ENCODE measurements at regions of chr19 and their contacts with region 1.

Region 1: DNA sequence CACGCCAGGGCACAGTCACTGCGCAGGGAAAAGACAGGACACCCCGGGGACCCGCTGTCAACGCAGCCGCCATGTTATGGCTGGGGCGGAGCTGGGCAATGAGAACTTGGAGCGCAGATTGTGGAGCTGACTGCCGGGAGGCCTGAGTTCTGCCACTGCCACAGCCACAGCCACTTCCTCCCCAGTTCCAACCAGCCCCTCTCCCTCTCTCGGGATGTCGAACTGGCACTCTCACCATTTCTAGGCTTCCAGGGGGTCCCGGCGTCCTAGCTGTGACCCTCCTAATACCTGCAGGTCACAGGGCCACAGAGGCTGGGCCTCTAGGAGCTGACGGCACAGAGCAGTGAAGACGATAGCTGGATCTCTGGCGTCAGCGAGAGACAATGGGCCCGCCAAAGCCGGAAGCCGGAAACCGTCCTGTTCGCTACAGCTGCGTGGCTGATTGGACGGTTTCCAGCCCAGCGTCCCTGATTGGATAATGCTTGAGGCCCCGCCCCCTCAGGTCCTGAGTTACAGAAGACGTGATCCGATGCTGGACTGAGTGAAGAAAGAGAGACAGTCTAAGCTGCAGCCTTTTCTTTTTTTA is at the start of gene ZNF506:
- DNase-seq: peak; percentile 95 to 99 (median 97)
- ATAC-seq: peak; percentile 82
- H3K4me3 ChIP-seq: peak within 1 kb of the TSS; percentile 91 to 97
- H3K4me3 Mint-ChIP-seq: peak within 1 kb of the TSS; percentile 100
- H3K27ac ChIP-seq: peak within 1 kb of the TSS; percentile 96 to 98
- H3K27ac Mint-ChIP-seq: peak within 1 kb of the TSS; percentile 100
- H3K4me1 ChIP-seq: peaks cover 33% of the 10 kb centered on the region
- H3K4me1 Mint-ChIP-seq: peaks cover 38% of the 10 kb centered on the region
- H3K27me3 ChIP-seq: no peaks in the 10 kb centered on the region
- H3K27me3 Mint-ChIP-seq: no peaks in the 10 kb centered on the region
- CTCF ChIP-seq: no peak
- total RNA-seq, gene ZNF506: 50.2 to 50.4 TPM

Region 2: GRCh38 chr19:19805480-19805879 is 16.0 kb before region 1 on chr19:
- CTCF ChIA-PET with region 1: interaction called, 4 read pairs
- POLR2A ChIA-PET with region 1: interaction called, 6 read pairs
- intact Hi-C with region 1: loop called in 1 of 2 experiments (anchors 2 kb)
- DNase-seq: no peak
- ATAC-seq: no peak
- H3K4me3 ChIP-seq: no peak overlapping the region
- H3K4me3 Mint-ChIP-seq: no peak overlapping the region
- H3K27ac ChIP-seq: no peak overlapping the region
- H3K27ac Mint-ChIP-seq: peak overlapping the region; percentile 45
- H3K4me1 ChIP-seq: peaks cover 10% of the 10 kb centered on the region
- H3K4me1 Mint-ChIP-seq: peaks cover 39% of the 10 kb centered on the region
- H3K27me3 ChIP-seq: no peaks in the 10 kb centered on the region
- H3K27me3 Mint-ChIP-seq: no peaks in the 10 kb centered on the region
- CTCF ChIP-seq: no peak

Region 3: GRCh38 chr19:19860756-19861390 is 39.4 kb after region 1 on chr19:
- CTCF ChIA-PET with region 1: interaction called, 5 read pairs
- POLR2A ChIA-PET with region 1: interaction called, 62 read pairs
- intact Hi-C with region 1: loop called (anchors 1 kb)
- DNase-seq: peak in 8 of 9 experiments; percentile 6 to 80 (median 62)
- ATAC-seq: peak; percentile 50
- H3K4me3 ChIP-seq: peak overlapping the region; percentile 2 to 11
- H3K4me3 Mint-ChIP-seq: peak overlapping the region; percentile 76
- H3K27ac ChIP-seq: no peak overlapping the region
- H3K27ac Mint-ChIP-seq: peak overlapping the region; percentile 64
- H3K4me1 ChIP-seq: no peaks in the 10 kb centered on the region
- H3K4me1 Mint-ChIP-seq: peaks cover 10% of the 10 kb centered on the region
- H3K27me3 ChIP-seq: no peaks in the 10 kb centered on the region
- H3K27me3 Mint-ChIP-seq: no peaks in the 10 kb centered on the region
- CTCF ChIP-seq: no peak

Region 4: GRCh38 chr19:19865739-19866481 is 44.5 kb after region 1 on chr19 and contains the start of gene ZNF253:
- CTCF ChIA-PET with region 1: interaction called, 5 read pairs
- POLR2A ChIA-PET with region 1: interaction called, 62 read pairs
- intact Hi-C with region 1: loop called (anchors 1 kb)
- DNase-seq: peak; percentile 88 to 97 (median 95)
- ATAC-seq: peak; percentile 93
- H3K4me3 ChIP-seq: peak within 1 kb of the TSS; percentile 89 to 99
- H3K4me3 Mint-ChIP-seq: peak within 1 kb of the TSS; percentile 100
- H3K27ac ChIP-seq: peak within 1 kb of the TSS; percentile 89 to 91
- H3K27ac Mint-ChIP-seq: peak within 1 kb of the TSS; percentile 98
- H3K4me1 ChIP-seq: peaks cover 22% of the 10 kb centered on the region
- H3K4me1 Mint-ChIP-seq: peaks cover 39% of the 10 kb centered on the region
- H3K27me3 ChIP-seq: no peaks in the 10 kb centered on the region
- H3K27me3 Mint-ChIP-seq: no peaks in the 10 kb centered on the region
- CTCF ChIP-seq: no peak
- total RNA-seq, gene ZNF253: 2.6 to 3.2 TPM

Region 5: GRCh38 chr19:19900729-19901444 is 79.4 kb after region 1 on chr19 and contains the start of gene ZNF93:
- CTCF ChIA-PET with region 1: interaction called, 3 read pairs
- POLR2A ChIA-PET with region 1: interaction called, 24 read pairs
- intact Hi-C with region 1: loop called (anchors 1 to 2 kb)
- DNase-seq: peak; percentile 83 to 95 (median 91)
- ATAC-seq: peak; percentile 97
- H3K4me3 ChIP-seq: peak within 1 kb of the TSS; percentile 86 to 95
- H3K4me3 Mint-ChIP-seq: peak within 1 kb of the TSS; percentile 94
- H3K27ac ChIP-seq: peak within 1 kb of the TSS; percentile 46 to 75
- H3K27ac Mint-ChIP-seq: peak within 1 kb of the TSS; percentile 91
- H3K4me1 ChIP-seq: peaks cover 10% of the 10 kb centered on the region
- H3K4me1 Mint-ChIP-seq: peaks cover 38% of the 10 kb centered on the region
- H3K27me3 ChIP-seq: no peaks in the 10 kb centered on the region
- H3K27me3 Mint-ChIP-seq: no peaks in the 10 kb centered on the region
- CTCF ChIP-seq: no peak
- total RNA-seq, gene ZNF93: 5.9 to 6.8 TPM